ENCODE measurements at regions of chr16 and their contacts with region 1.

Region 1: GRCh38 chr16:77584205-77584859 is 138.0 kb upstream of the NUDT7 start:
- DNase-seq: peak; percentile 64
- ATAC-seq: peak; percentile 49
- H3K4me3 Mint-ChIP-seq: no peak overlapping the region
- H3K27ac Mint-ChIP-seq: no peak overlapping the region
- H3K4me1 Mint-ChIP-seq: peaks cover 7% of the 10 kb centered on the region
- H3K27me3 Mint-ChIP-seq: peaks cover 30% of the 10 kb centered on the region

Region 2: DNA sequence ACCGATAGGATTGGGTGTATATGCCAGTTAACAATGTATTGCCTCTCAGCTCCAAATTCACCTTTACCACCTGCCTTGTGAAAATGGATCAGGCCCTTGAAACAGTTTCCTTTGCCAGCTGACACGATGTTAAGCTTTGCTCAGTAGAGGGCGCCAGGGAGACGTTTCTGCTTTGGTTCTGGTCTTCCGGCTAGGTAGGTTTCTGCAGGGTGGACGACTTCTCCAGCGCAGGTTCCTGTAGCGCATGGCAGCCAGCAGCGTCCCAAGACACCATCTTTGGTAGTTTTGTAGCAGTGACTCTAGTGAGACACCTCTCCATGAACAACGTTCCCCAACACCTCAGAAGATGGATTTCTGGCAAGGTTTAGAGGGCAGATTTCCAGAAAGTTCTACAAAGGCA is 361.1 kb before region 1 on chr16:
- CTCF ChIA-PET with region 1: interaction called, 10 read pairs
- POLR2A ChIA-PET with region 1: no interaction called
- intact Hi-C with region 1: no loop called
- DNase-seq: peak; percentile 66
- ATAC-seq: peak; percentile 66
- H3K4me3 Mint-ChIP-seq: no peak overlapping the region
- H3K27ac Mint-ChIP-seq: no peak overlapping the region
- H3K4me1 Mint-ChIP-seq: peaks cover 7% of the 10 kb centered on the region
- H3K27me3 Mint-ChIP-seq: no peaks in the 10 kb centered on the region

Region 3: DNA sequence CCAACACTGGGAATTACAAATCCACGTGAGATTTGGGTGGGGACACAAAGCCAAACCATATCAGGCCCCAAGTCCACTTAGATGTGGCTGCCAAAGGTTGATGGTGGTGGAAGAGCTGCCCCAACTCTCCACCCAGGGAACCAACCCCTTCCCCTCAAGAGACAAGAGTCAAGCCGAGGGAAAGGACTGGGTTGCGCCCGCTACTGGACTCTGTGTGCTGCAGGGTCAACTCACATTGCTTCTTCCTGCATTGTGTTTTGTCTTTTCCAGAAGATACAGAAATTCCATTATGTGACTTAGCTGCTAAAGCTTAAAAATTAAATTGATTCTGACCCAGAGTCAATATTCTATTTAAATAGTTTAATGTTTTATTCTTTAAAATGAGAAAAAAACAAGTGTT is 208.0 kb before region 1 on chr16:
- CTCF ChIA-PET with region 1: no interaction called
- POLR2A ChIA-PET with region 1: no interaction called
- intact Hi-C with region 1: loop called in 1 of 2 experiments (anchors 2 kb)
- DNase-seq: peak; percentile 15
- ATAC-seq: no peak
- H3K4me3 Mint-ChIP-seq: no peak overlapping the region
- H3K27ac Mint-ChIP-seq: no peak overlapping the region
- H3K4me1 Mint-ChIP-seq: no peaks in the 10 kb centered on the region
- H3K27me3 Mint-ChIP-seq: peaks cover 9% of the 10 kb centered on the region

Region 4: GRCh38 chr16:77569406-77569805 is 14.9 kb before region 1 on chr16:
- CTCF ChIA-PET with region 1: interaction called, 13 read pairs
- POLR2A ChIA-PET with region 1: no interaction called
- intact Hi-C with region 1: no loop called
- DNase-seq: no peak
- ATAC-seq: no peak
- H3K4me3 Mint-ChIP-seq: no peak overlapping the region
- H3K27ac Mint-ChIP-seq: no peak overlapping the region
- H3K4me1 Mint-ChIP-seq: no peaks in the 10 kb centered on the region
- H3K27me3 Mint-ChIP-seq: peaks cover 18% of the 10 kb centered on the region

Measured in activated CD4-positive, alpha-beta T cell treated with anti-CD3 and anti-CD28 coated beads for 36 hours (primary cell).